Right cardiac atrium (tissue), 5 donors: ENCODE measurements at regions of chrX and their contacts with region 1.

Region 1: DNA sequence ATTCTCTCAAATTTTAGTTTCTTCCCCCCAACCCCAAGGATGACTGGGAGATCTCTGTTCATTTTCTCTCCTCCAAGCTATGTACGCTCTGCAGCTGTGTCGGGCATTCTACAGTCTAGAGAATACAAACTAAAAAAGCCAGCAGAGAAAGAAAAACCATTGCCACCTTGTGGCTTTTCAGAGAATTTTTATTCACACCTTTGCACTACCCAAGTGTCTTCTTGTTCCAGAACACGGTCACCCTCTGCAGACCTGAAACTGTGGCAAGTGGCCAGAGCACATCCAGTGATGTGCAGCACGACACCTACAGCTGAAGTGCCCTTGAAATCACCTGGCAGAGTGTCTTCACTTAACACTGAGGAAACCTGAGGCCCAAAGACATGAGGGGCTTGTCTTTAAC is 68.6 kb downstream of the CHST7 start:
- DNase-seq: peak in 2 of 3 donors; percentile 58
- ATAC-seq: peak; percentile 85 to 91
- H3K4me3 ChIP-seq: no peak overlapping the region
- H3K27ac ChIP-seq: no peak overlapping the region
- H3K4me1 ChIP-seq: no peaks in the 10 kb centered on the region
- H3K27me3 ChIP-seq: no peaks in the 10 kb centered on the region

Region 2: DNA sequence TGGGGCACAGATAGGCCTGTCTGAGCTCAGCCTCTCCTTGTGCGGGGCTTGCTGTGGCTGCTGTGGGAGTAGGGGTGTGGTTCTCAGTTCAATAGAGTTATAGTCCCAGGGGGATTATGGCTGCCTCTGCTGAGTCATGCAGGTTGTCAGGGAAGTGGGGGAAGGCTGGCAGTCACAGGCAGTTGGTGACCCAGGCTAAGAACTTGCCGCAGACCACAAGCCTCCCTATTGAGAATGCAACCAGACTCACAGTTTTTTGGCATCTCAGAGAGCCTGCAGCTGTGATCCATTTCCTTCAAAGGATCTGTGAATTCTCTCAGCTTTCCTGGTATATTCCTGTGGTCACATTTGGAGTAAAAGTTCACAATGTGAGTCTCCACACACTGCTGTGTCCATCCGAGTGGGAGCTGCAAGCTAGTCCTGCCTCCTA is 461.9 kb before region 1 on chrX:
- intact Hi-C with region 1: no loop called
- DNase-seq: no peak
- ATAC-seq: no peak
- H3K4me3 ChIP-seq: no peak overlapping the region
- H3K27ac ChIP-seq: no peak overlapping the region
- H3K4me1 ChIP-seq: no peaks in the 10 kb centered on the region
- H3K27me3 ChIP-seq: no peaks in the 10 kb centered on the region

Region 3: GRCh38 chrX:46561824-46562657 is 80.1 kb before region 1 on chrX:
- intact Hi-C with region 1: loop called in 2 of 4 experiments (anchors 5 to 10 kb)
- DNase-seq: peak in 1 of 3 donors; percentile 46
- ATAC-seq: peak; percentile 26 to 47
- H3K4me3 ChIP-seq: no peak overlapping the region
- H3K27ac ChIP-seq: no peak overlapping the region
- H3K4me1 ChIP-seq: peaks cover 2% of the 10 kb centered on the region
- H3K27me3 ChIP-seq: no peaks in the 10 kb centered on the region

Region 4: GRCh38 chrX:46573331-46573891 is 68.7 kb before region 1 on chrX and contains the start of gene CHST7:
- intact Hi-C with region 1: loop called in 2 of 4 experiments (anchors 2 to 10 kb)
- DNase-seq: peak; percentile 80 to 92 (median 90)
- ATAC-seq: peak; percentile 88 to 92
- H3K4me3 ChIP-seq: peak within 1 kb of the TSS; percentile 75
- H3K27ac ChIP-seq: peak within 1 kb of the TSS; percentile 87
- H3K4me1 ChIP-seq: peaks cover 6% of the 10 kb centered on the region
- H3K27me3 ChIP-seq: no peaks in the 10 kb centered on the region
- total RNA-seq, gene CHST7: 12.8 to 41.5 (median 16.2) TPM